ENCODE measurements at regions of chr19 and their contacts with region 1.

Region 1: DNA sequence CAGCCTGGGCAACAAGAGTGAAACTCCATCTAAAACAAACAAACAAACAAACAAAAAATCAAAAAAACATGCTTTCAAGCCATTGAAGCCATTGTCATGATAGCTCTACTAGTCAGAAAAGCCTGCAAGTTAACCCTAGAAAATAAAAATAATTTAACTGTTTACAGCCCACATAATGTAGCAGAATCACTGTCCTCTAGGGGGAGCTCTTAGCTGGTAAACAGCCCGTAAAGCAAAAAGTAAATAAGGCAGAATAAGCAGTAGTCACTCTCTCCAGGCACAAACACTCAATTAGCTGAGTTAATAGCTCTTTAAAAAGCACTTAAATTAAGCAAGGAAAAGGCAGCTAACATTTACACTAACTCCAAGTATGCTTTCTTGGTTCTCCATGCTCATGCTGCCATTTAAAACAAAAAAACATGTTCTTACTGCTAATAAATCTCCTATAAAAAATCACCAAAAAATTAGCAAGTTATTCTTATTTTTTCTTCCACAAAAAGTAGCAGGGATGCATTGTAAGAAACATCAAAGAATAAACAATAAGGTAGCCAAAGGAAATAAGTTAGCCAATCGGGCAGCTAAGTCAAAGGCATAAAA is 11.3 kb downstream of the LILRB4 start:
- DNase-seq: peak; percentile 22
- ATAC-seq: no peak
- H3K4me3 Mint-ChIP-seq: no peak overlapping the region
- H3K27ac Mint-ChIP-seq: no peak overlapping the region
- H3K4me1 Mint-ChIP-seq: no peaks in the 10 kb centered on the region
- H3K27me3 Mint-ChIP-seq: peaks cover 4% of the 10 kb centered on the region
- CTCF ChIP-seq: peak; percentile 70

Region 2: GRCh38 chr19:54481322-54481930 is 192.7 kb before region 1 on chr19:
- CTCF ChIA-PET with region 1: interaction called, 66 read pairs
- POLR2A ChIA-PET with region 1: no interaction called
- intact Hi-C with region 1: loop called (anchors 5 kb)
- DNase-seq: peak; percentile 49
- ATAC-seq: peak; percentile 58
- H3K4me3 Mint-ChIP-seq: no peak overlapping the region
- H3K27ac Mint-ChIP-seq: no peak overlapping the region
- H3K4me1 Mint-ChIP-seq: peaks cover 4% of the 10 kb centered on the region
- H3K27me3 Mint-ChIP-seq: peaks cover 25% of the 10 kb centered on the region
- CTCF ChIP-seq: peak; percentile 92

Region 3: DNA sequence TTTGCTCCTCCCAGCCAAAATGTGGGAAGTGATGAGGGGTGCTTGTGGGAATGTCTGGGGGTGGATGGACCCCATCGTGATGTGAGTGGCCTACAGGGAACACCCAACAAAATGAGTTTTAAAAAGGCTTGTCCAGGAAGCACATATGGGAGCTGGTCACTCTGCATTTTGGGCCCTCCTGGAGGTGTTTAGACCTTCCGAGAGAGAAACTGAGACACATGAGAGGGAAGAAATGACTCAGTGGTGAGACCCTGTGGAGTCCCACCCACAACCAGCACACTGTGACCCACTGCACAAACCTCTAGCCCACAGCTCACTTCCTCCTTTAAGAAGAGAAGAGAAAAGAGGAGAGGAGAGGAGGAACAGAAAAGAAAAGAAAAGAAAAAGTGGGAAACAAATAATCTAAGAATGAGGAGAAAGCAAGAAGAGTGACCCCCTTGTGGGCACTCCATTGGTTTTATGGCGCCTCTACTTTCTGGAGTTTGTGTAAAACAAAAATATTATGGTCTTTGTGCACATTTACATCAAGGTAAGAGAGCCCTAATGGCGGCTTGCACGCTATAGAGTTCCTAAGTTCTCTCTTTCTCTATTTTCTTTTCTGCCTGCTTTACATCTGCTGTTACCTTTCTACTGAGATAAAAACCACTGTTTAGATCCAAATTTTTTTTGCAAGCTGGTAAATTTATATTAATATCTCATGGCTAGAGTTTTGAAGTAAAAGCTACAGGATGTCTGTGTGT is 57.1 kb before region 1 on chr19:
- CTCF ChIA-PET with region 1: no interaction called
- POLR2A ChIA-PET with region 1: no interaction called
- intact Hi-C with region 1: no loop called
- DNase-seq: no peak
- ATAC-seq: no peak
- H3K4me3 Mint-ChIP-seq: no peak overlapping the region
- H3K27ac Mint-ChIP-seq: no peak overlapping the region
- H3K4me1 Mint-ChIP-seq: no peaks in the 10 kb centered on the region
- H3K27me3 Mint-ChIP-seq: peaks cover 5% of the 10 kb centered on the region
- CTCF ChIP-seq: no peak

Region 4: DNA sequence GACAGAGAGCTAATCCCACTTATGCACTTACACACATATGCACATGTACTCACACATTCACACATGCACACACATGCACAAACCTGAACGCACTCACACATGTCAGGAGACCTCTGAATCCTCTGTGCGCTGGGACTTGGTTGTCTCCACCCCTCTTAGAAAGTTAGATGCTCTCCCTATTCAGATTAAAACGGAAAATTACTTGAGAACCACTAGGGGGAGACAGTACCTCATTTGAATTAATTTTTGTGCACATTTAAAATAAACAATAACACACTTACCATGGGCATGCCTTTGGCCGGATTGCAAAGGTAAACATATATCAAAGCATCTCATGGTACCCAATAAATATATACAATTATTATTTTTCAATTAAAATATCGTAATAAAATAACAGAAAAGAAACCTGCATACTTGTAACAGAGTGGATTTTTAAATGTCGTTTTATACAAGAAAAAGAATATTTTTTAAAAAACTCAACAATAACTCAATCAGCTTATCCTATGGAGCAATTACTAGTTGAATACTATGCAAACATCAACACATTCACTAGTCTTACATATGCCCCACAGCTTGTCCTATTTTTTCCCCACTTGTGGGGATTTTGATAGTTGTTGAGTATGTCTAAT is 20.8 kb before region 1 on chr19:
- CTCF ChIA-PET with region 1: interaction called, 40 read pairs
- POLR2A ChIA-PET with region 1: no interaction called
- intact Hi-C with region 1: no loop called
- DNase-seq: no peak
- ATAC-seq: no peak
- H3K4me3 Mint-ChIP-seq: no peak overlapping the region
- H3K27ac Mint-ChIP-seq: no peak overlapping the region
- H3K4me1 Mint-ChIP-seq: no peaks in the 10 kb centered on the region
- H3K27me3 Mint-ChIP-seq: peaks cover 7% of the 10 kb centered on the region
- CTCF ChIP-seq: peak; percentile 88

Region 5: DNA sequence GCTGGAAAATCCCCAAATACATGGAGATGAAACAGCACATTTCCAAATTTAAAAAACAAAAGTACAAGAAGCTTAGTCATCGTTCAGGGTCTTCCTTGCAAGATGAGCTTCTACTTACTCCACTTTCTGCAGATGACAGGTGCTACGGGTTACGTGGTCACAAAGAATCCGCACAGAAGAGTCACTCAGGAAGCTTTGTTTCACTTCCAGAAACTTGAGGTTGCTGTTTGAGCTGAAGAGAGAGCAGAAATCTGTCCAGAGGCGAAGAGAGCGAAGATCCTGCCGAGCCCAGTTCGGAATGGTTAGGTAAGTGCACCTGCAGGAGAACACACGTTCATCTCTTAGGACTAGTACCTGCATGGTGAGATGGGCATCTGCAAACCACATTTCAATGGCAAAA is 263.8 kb after region 1 on chr19:
- CTCF ChIA-PET with region 1: no interaction called
- POLR2A ChIA-PET with region 1: no interaction called
- intact Hi-C with region 1: no loop called
- DNase-seq: peak; percentile 31
- ATAC-seq: peak; percentile 37
- H3K4me3 Mint-ChIP-seq: no peak overlapping the region
- H3K27ac Mint-ChIP-seq: no peak overlapping the region
- H3K4me1 Mint-ChIP-seq: peaks cover 7% of the 10 kb centered on the region
- H3K27me3 Mint-ChIP-seq: peaks cover 1% of the 10 kb centered on the region
- CTCF ChIP-seq: no peak